Activated CD4-positive, alpha-beta T cell treated with anti-CD3 and anti-CD28 coated beads, Interleukin-2, amount 10 ng/mL, durations not matched to agents 24 days and 14 days (primary cell): ENCODE measurements at regions of chr10 and their contacts with region 1.

Region 1: GRCh38 chr10:103504181-103504783 is 10.8 kb downstream of the NEURL1 start:
- DNase-seq: peak; percentile 84
- H3K4me3 Mint-ChIP-seq: peak overlapping the region; percentile 53
- H3K27ac Mint-ChIP-seq: peak overlapping the region; percentile 59
- H3K4me1 Mint-ChIP-seq: peaks cover 31% of the 10 kb centered on the region
- H3K27me3 Mint-ChIP-seq: peaks cover 59% of the 10 kb centered on the region

Region 2: DNA sequence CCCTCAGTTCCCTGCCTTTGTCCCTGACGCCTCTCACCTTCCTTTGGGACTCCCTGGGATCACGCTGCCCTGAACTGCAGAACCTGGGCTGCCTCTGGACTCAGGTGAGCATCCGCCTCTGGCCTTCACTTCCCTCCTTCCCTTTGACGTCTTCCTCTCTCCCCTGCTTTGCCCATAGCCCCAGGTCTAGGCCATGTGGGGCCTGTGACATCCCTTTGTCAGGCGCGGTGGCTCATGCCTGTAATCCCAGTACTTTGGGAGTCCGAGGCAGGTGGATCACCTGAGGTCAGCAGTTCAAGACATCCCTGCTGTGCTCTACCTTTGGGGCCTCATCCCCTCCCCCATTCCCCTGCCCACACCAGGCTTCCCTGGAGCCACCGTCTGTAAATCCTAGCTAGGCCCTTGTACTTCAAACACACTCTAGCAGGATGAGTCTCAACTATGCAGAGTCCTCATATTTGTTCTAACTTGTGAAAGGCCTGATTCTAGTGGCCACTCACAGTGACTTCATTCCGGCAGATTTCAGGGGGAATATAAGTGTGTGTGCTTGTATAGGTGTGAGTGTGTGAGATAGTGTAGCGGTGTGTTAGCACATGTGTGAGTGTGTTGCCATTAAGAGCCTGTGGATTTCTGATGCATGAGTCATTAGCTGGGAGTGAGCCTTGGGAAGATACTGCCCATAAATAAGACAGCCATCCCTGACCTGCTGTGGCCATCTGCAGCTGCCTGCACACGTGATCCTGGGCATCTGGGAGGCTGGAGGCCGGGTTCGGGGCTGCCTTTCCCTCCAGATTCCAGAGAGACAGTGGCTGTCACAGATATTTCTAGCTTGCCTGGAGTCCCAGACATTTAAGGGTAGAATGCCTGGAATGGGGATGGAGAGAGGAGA is 12.5 kb before region 1 on chr10:
- intact Hi-C with region 1: loop called (anchors 1 kb)
- DNase-seq: no peak
- H3K4me3 Mint-ChIP-seq: no peak overlapping the region
- H3K27ac Mint-ChIP-seq: peak overlapping the region; percentile 6
- H3K4me1 Mint-ChIP-seq: peaks cover 22% of the 10 kb centered on the region
- H3K27me3 Mint-ChIP-seq: peaks cover 55% of the 10 kb centered on the region

Region 3: GRCh38 chr10:103542764-103543616 is 38.7 kb after region 1 on chr10:
- intact Hi-C with region 1: loop called (anchors 1 kb)
- DNase-seq: peak; percentile 78
- H3K4me3 Mint-ChIP-seq: peak overlapping the region; percentile 71
- H3K27ac Mint-ChIP-seq: peak overlapping the region; percentile 64
- H3K4me1 Mint-ChIP-seq: peaks cover 15% of the 10 kb centered on the region
- H3K27me3 Mint-ChIP-seq: peaks cover 18% of the 10 kb centered on the region

Region 4: GRCh38 chr10:103661198-103661950 is 157.1 kb after region 1 on chr10:
- intact Hi-C with region 1: no loop called
- DNase-seq: peak; percentile 85
- H3K4me3 Mint-ChIP-seq: peak overlapping the region; percentile 94
- H3K27ac Mint-ChIP-seq: peak overlapping the region; percentile 89
- H3K4me1 Mint-ChIP-seq: peaks cover 10% of the 10 kb centered on the region
- H3K27me3 Mint-ChIP-seq: no peaks in the 10 kb centered on the region